ENCODE measurements at regions of chr4 and their contacts with region 1.

Region 1: DNA sequence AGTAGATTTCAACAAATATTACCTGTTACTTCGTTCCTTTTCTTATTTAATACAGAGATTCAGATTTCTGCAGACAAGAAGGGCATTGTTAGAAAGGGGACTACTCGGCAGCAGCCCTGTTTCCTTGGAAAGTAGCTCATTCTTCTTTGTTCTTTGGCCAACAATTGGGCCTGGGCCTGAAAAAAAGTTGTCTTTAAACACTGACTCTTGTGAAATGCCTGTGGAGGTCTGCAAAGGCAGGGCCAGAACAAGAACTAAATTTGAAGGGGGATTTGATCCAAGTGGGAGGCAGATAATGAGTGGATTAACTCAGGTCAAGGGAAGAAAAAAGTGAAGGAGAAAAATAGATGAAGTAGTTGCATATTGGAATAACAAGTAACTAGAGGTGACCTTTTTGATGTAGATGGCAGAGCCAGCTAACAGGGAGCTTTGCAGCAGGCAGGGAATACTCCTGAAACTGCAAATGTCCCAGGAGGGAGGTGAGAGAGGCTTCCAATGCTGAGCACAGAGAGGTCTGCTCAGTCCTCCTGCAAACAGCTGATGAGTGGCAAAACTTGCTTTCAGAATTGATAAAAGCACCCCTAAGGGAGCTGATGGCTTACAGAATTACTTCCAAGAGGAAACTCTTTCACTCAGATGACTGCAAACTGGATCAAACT is 393.2 kb upstream of the HS3ST1 start:
- DNase-seq: no peak

Region 2: GRCh38 chr4:11966782-11967181 is 144.9 kb after region 1 on chr4:
- intact Hi-C with region 1: loop called (anchors 10 kb)
- DNase-seq: no peak

Measured in cardiac septum (tissue), 1 donor.